GM12878 (cell line): ENCODE measurements at regions of chr20 and their contacts with region 1.

Region 1: GRCh38 chr20:62088237-62089127 is 22.8 kb upstream of the TAF4 start:
- DNase-seq: no peak
- ATAC-seq: no peak
- H3K4me3 ChIP-seq: no peak overlapping the region
- H3K27ac ChIP-seq: no peak overlapping the region
- H3K4me1 ChIP-seq: no peaks in the 10 kb centered on the region
- H3K27me3 ChIP-seq: no peaks in the 10 kb centered on the region
- CTCF ChIP-seq: no peak
- EP300 ChIP-seq: no peak
- POLR2A ChIP-seq: no peak
- RAD21 ChIP-seq: no peak

Region 2: DNA sequence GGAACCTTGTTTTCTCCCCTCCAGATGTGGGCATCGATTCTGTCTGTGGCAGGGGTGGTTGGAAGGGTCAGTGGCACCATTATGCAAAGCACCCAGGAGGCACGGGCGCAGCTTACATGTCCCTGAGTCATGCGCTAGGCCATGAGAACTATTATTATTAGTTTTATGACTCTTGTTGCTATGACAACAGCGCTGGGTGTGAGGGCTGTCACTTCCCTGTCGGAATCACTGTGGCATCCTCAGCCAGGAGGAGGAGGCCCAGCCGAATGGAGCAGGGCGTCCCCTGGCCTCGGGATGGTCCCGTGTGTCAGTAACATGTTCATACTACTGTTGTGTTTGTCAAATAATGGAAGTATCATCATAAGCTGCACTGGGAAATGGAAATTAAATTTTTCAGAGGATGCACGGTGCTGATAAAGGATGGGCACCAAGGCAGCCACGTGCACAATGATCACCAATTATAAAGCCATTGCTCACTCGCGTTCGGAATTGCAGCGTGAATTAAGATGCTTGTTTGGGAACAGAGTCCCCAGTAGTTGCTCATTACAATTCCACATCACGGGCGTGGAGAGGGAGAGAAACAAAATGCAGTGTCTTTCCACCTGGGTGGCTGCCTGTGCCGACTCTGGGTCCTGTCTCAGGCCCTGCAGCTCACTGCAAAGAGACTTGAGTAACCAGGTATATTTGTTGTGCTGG is 588.5 kb before region 1 on chr20:
- CTCF ChIA-PET with region 1: no interaction called
- POLR2A ChIA-PET with region 1: no interaction called
- RAD21 ChIA-PET with region 1: no interaction called
- SMC1A ChIA-PET with region 1: no interaction called
- in situ Hi-C with region 1: loop called (anchors 25 kb)
- intact Hi-C with region 1: no loop called
- DNase-seq: no peak
- ATAC-seq: no peak
- H3K4me3 ChIP-seq: no peak overlapping the region
- H3K27ac ChIP-seq: no peak overlapping the region
- H3K4me1 ChIP-seq: no peaks in the 10 kb centered on the region
- H3K27me3 ChIP-seq: no peaks in the 10 kb centered on the region
- CTCF ChIP-seq: no peak
- EP300 ChIP-seq: no peak
- POLR2A ChIP-seq: no peak
- RAD21 ChIP-seq: no peak